ENCODE measurements at regions of chr10 and their contacts with region 1.

Region 1: GRCh38 chr10:26310361-26310760 is 93.8 kb downstream of the GAD2 start:
- DNase-seq: peak; percentile 95
- H3K4me3 ChIP-seq: peak overlapping the region; percentile 66
- H3K27ac ChIP-seq: peak overlapping the region; percentile 88
- H3K4me1 ChIP-seq: peaks cover 63% of the 10 kb centered on the region
- CTCF ChIP-seq: no peak

Region 2: DNA sequence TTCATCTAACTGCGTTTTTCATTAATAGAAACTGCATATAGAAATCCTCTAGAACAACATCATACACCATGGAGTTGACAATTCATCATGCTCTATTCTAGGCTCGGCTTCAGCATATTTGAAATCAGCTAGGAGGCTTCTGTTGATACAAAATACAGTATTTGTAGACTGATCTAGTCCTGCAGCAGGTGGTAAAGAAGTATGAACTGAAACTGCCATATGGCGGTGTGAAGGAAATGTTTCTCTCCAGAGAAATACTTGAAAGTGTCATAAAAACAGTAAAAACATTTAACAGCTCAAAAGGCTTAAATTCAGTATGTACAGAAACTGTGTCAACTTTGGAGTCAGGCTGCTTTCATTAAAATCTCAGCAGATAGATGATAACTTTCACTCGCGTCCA is 408.4 kb before region 1 on chr10:
- CTCF ChIA-PET with region 1: no interaction called
- POLR2A ChIA-PET with region 1: no interaction called
- intact Hi-C with region 1: loop called (anchors 2 kb)
- DNase-seq: peak; percentile 86
- H3K4me3 ChIP-seq: peak overlapping the region; percentile 43
- H3K27ac ChIP-seq: peak overlapping the region; percentile 86
- H3K4me1 ChIP-seq: peaks cover 38% of the 10 kb centered on the region
- CTCF ChIP-seq: no peak

Region 3: DNA sequence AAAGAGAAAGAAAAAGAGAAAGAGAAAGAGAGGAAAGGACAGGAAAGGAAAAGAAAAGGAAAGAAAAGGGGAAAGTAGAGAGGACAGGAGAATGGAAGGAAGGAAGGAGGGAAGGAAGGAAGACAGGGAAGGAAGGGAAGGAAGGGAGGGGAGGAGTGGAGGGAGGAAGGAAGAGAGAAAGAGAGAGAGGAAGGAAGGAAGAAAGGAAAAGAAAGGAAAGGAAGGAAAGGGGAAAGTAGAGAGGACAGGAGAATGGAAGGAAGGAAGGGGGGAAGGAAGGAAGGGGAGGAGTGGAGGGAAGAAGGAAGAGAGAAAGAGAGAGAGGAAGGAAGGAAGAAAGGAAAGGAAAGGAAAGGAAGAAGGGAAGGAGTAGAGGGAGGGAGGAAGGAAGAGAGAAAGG is 31.3 kb after region 1 on chr10:
- CTCF ChIA-PET with region 1: no interaction called
- POLR2A ChIA-PET with region 1: no interaction called
- intact Hi-C with region 1: no loop called
- DNase-seq: no peak
- H3K4me3 ChIP-seq: no peak overlapping the region
- H3K27ac ChIP-seq: no peak overlapping the region
- H3K4me1 ChIP-seq: no peaks in the 10 kb centered on the region
- CTCF ChIP-seq: no peak

Region 4: GRCh38 chr10:26372513-26373354 is 62.4 kb after region 1 on chr10:
- CTCF ChIA-PET with region 1: no interaction called
- POLR2A ChIA-PET with region 1: no interaction called
- intact Hi-C with region 1: loop called (anchors 1 kb)
- DNase-seq: peak; percentile 85
- H3K4me3 ChIP-seq: peak overlapping the region; percentile 54
- H3K27ac ChIP-seq: peak overlapping the region; percentile 93
- H3K4me1 ChIP-seq: peaks cover 43% of the 10 kb centered on the region
- CTCF ChIP-seq: no peak; the same call in 1 of the 2 replicates